OCI-LY7 (cell line): ENCODE measurements at regions of chr9 and their contacts with region 1.

Region 1: GRCh38 chr9:5582835-5583195 is 46.1 kb upstream of the RIC1 start:
- DNase-seq: peak; percentile 63
- H3K4me3 ChIP-seq: no peak overlapping the region
- H3K27ac ChIP-seq: no peak overlapping the region
- H3K4me1 ChIP-seq: peaks cover 33% of the 10 kb centered on the region
- CTCF ChIP-seq: no peak

Region 2: DNA sequence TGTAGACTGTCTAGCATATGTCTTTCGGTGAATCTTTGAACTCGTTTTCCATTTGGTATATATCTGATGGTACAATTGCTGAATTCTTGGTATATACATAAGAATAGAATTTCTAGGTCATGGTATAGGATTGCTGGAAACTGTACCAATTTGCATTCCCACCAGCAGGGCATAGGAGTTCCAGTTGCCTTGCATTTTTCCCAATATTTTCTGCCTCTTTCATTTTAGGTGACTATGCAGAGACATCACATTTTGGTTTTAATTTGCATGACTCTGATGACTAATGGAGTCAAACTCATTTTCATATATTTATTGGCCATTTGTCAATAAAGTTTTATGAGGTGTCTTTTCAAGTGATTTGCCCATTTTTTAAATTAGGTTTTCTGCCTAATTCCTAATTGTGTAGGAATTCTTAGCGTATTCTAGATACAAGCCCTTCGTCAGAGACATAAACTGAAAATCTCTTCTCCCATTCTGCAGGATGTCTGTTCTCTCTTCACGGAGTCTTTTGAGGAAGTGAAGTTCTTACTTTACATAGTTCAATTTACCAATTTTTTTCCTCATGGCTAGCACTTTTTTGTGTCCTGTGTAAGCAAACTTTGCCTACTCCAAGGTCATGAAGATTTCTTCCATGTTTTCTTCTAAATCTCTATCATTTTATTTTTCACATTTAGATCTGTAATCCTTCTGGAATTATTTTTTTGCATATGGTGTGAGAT is 101.3 kb before region 1 on chr9:
- CTCF ChIA-PET with region 1: no interaction called
- POLR2A ChIA-PET with region 1: no interaction called
- intact Hi-C with region 1: no loop called
- DNase-seq: no peak
- H3K4me3 ChIP-seq: no peak overlapping the region
- H3K27ac ChIP-seq: no peak overlapping the region
- H3K4me1 ChIP-seq: no peaks in the 10 kb centered on the region
- CTCF ChIP-seq: no peak

Region 3: GRCh38 chr9:5566054-5566618 is 16.7 kb before region 1 on chr9:
- CTCF ChIA-PET with region 1: no interaction called
- POLR2A ChIA-PET with region 1: interaction called, 11 read pairs
- intact Hi-C with region 1: no loop called
- DNase-seq: peak; percentile 47
- H3K4me3 ChIP-seq: no peak overlapping the region
- H3K27ac ChIP-seq: no peak overlapping the region
- H3K4me1 ChIP-seq: peaks cover 20% of the 10 kb centered on the region
- CTCF ChIP-seq: no peak